ENCODE measurements at regions of chr1 and their contacts with region 1.

Region 1: GRCh38 chr1:30085811-30086770 is 637.3 kb downstream of the MATN1 start:
- DNase-seq: peak; percentile 66 to 85 (median 80)
- ATAC-seq: peak; percentile 94
- H3K4me3 ChIP-seq: no peak overlapping the region
- H3K27ac ChIP-seq: no peak overlapping the region
- H3K4me1 ChIP-seq: peaks cover 0 to 5% of the 10 kb centered on the region in 2 experiments; a peak in 2 of 5 replicates
- H3K27me3 ChIP-seq: peaks cover 2 to 19% of the 10 kb centered on the region in 2 experiments; a peak in 3 of 5 replicates
- CTCF ChIP-seq: peak; percentile 62 to 93 (median 75); a peak in 5 of 6 replicates
- EP300 ChIP-seq: no peak
- POLR2A ChIP-seq: no peak
- RAD21 ChIP-seq: peak; percentile 51 to 63

Region 2: GRCh38 chr1:29379443-29380073 is 706.5 kb before region 1 on chr1:
- CTCF ChIA-PET with region 1: no interaction called
- POLR2A ChIA-PET with region 1: no interaction called
- in situ Hi-C with region 1: loop called (anchors 10 kb)
- intact Hi-C with region 1: loop called (anchors 10 kb)
- DNase-seq: peak; percentile 60 to 70 (median 64)
- ATAC-seq: peak; percentile 71
- H3K4me3 ChIP-seq: no peak overlapping the region
- H3K27ac ChIP-seq: no peak overlapping the region
- H3K4me1 ChIP-seq: no peaks in the 10 kb centered on the region
- H3K27me3 ChIP-seq: peaks cover 0 to 13% of the 10 kb centered on the region in 2 experiments; a peak in 1 of 5 replicates
- CTCF ChIP-seq: peak; percentile 85 to 95 (median 88)
- EP300 ChIP-seq: 0 out of 2 replicates have a peak, but pooled peaks have one; percentile 27
- POLR2A ChIP-seq: no peak
- RAD21 ChIP-seq: peak; percentile 86 to 98